Naive thymus-derived CD8-positive, alpha-beta T cell (primary cell): ENCODE measurements at regions of chr3 and their contacts with region 1.

Region 1: DNA sequence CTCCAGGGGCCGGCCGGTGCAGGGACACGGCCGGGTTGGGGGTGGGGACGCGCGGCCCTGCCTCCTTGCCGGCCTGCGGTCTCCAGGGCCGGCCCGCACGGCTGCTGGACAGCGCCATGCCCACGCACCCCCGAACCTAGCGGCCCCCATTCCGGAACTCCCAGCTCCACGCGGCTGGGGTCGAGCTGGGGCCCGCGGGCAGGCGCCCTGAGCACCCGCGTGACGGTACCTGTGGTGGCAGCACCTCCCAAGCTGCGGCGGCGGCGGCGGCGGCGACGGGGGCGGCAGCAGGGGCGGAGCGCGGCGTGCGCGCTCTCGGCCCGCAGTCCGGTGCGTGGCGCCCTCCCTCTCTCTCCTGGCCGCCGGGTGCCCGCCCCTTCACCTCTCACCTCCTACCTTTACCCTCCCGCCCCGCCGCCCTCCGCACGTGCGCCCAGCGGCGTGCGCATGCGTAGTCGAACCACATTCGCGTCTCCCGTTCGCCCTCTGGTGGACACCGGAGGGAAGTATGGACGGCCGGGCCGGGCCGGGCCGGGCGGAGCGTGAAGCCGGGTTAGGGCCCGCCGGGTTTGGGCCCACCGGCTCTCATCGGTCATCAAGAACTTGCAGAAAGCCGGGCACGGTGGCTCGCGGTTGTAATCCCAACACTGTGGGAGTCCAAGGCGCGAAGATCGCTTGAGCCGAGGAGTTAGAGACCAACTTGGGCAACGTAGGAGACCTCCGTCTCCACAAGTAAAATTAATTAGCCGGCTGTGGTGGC is at the start of gene SCAP:
- DNase-seq: peak; percentile 91 to 98 (median 95)
- ATAC-seq: peak; percentile 84 to 87
- H3K4me3 Mint-ChIP-seq: peak within 1 kb of the TSS; percentile 88 to 97 (median 94)
- H3K27ac Mint-ChIP-seq: peak within 1 kb of the TSS; percentile 91 to 97 (median 94)
- H3K4me1 Mint-ChIP-seq: peaks cover 16 to 47% (median 43%) of the 10 kb centered on the region in 4 donors
- H3K27me3 Mint-ChIP-seq: no peaks in the 10 kb centered on the region
- polyA plus RNA-seq, gene SCAP: 32.3 to 55.7 (median 38.7) TPM

Region 2: DNA sequence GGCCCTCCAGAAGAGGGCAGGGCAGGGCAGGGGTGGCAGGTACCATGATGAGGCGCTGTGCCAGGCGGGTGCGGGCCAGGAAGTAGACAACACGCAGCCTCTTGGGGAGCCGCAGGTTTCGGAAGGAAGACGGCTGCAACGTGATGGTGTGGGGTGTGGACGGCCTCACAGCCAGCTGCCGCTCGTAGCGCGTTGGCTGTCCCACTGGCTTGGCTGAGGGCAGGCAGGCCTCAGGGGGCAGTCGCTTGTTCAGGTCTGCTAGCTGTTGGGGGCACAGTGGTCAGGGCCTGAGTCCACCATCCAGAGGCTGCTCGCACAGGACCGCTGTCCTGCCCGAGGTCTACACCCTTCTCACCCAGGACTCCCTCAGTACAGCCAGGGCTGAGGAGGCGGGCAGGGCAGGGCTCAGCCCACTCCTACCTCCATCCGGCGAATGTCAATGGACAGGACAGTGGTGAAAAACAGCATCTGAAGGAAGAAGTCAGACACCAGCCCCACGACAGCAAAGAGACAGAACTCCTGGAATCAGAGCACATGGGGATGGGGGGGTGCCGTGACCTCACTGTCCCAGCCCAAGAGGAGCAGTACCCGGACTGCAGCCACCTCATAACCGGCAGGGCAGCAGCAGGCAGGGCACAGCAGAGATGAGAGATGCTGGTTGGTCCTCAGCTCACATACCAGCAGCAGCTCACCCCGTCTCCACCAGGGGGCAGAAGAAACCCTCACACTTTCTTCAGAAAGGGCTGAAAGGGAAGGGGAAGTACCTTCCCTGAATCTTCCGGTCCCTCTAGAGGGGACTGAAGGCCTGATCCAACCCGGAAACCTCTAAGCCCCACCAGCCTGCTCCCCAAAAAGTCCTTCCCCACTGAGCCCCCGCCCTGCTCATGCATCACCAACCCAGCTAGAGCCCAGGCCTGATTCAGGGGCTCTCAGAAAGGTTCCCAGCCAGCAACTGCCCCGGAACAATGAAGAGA is 55.0 kb before region 1 on chr3:
- POLR2A ChIA-PET with region 1: interaction called, 23 read pairs
- DNase-seq: peak; percentile 74 to 94 (median 88)
- ATAC-seq: peak; percentile 92 to 97
- H3K4me3 Mint-ChIP-seq: peak overlapping the region; percentile 60 to 88 (median 80)
- H3K27ac Mint-ChIP-seq: peak overlapping the region; percentile 91 to 100 (median 99)
- H3K4me1 Mint-ChIP-seq: peaks cover 12 to 22% (median 21%) of the 10 kb centered on the region in 4 donors
- H3K27me3 Mint-ChIP-seq: no peaks in the 10 kb centered on the region

Region 3: GRCh38 chr3:47455806-47456452 is 19.8 kb before region 1 on chr3:
- POLR2A ChIA-PET with region 1: no interaction called
- DNase-seq: no peak
- ATAC-seq: no peak
- H3K4me3 Mint-ChIP-seq: peak overlapping the region in 1 of 10 donors; percentile 5
- H3K27ac Mint-ChIP-seq: peak overlapping the region in 4 of 10 donors; percentile 3 to 67 (median 36)
- H3K4me1 Mint-ChIP-seq: peaks cover 20 to 52% (median 41%) of the 10 kb centered on the region in 4 donors
- H3K27me3 Mint-ChIP-seq: no peaks in the 10 kb centered on the region

Region 4: DNA sequence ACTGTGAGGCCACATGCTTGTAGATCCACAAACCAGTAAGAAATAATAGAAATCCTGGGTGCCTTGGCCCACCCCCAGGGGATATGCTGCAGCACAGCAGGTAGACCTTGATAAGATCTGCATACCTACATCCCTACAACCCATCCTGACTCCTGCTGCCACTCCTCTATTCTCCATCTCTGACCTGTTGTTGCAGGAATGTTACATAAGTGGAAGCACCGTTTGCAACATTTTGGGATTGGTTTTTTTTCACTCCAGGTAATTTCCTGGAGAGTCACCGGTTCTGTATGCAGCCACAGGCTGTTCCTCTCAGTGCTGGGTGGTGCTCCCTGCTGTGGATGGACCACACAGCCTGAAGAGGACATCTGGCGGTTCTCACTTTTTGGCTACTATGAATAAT is 119.0 kb after region 1 on chr3:
- POLR2A ChIA-PET with region 1: no interaction called
- DNase-seq: no peak
- ATAC-seq: no peak
- H3K4me3 Mint-ChIP-seq: peak overlapping the region in 1 of 10 donors; percentile 20
- H3K27ac Mint-ChIP-seq: peak overlapping the region in 1 of 10 donors; percentile 40
- H3K4me1 Mint-ChIP-seq: peaks cover 0 to 5% (median 1%) of the 10 kb centered on the region in 4 donors
- H3K27me3 Mint-ChIP-seq: no peaks in the 10 kb centered on the region